Activated CD8-positive, alpha-beta T cell treated with anti-CD3 and anti-CD28 coated beads for 36 hours (primary cell): ENCODE measurements at regions of chr11 and their contacts with region 1.

Region 1: DNA sequence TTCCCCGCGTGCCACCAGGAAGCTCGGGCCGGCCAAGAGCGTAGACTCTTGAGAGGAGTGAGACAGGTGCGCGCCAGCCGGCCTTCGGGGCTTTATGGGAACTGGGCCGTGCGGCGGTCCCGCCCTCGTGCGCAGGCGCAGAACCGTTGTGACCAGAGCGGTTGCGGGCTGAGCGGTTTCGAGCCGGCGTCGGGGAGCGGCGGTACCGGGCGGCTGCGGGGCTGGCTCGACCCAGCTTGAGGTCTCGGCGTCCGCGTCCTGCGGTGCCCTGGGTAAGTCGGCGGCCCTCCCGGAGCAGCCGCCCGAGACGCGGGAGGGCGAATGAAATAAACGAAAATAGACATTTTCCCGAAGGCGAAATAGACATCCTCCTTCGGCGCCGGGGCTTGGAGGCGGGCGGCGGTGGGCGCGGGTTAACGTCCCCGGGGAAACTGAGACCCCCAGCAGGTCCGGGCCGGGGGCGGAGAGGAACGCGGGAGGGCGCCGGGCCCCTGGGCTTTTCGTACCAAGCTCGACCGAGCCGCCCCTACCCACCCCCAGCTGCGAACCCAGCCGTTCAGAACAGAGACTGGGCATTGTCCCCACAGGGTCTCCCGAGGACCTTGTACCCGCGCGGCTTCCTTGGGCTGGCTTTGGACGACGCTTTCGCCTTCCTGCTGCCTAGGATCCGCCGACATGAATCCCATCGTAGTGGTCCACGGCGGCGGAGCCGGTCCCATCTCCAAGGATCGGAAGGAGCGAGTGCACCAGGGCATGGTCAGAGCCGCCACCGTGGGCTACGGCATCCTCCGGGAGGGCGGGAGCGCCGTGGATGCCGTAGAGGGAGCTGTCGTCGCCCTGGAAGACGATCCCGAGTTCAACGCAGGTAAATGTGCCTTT is at the start of gene ASRGL1:
- DNase-seq: peak; percentile 80
- ATAC-seq: peak; percentile 84
- H3K4me3 Mint-ChIP-seq: peak within 1 kb of the TSS; percentile 80
- H3K27ac Mint-ChIP-seq: peak within 1 kb of the TSS; percentile 32
- H3K4me1 Mint-ChIP-seq: peaks cover 8% of the 10 kb centered on the region
- H3K27me3 Mint-ChIP-seq: peaks cover 4% of the 10 kb centered on the region
- CTCF ChIP-seq: no peak
- total RNA-seq, gene ASRGL1: 6.4 to 6.7 TPM

Region 2: DNA sequence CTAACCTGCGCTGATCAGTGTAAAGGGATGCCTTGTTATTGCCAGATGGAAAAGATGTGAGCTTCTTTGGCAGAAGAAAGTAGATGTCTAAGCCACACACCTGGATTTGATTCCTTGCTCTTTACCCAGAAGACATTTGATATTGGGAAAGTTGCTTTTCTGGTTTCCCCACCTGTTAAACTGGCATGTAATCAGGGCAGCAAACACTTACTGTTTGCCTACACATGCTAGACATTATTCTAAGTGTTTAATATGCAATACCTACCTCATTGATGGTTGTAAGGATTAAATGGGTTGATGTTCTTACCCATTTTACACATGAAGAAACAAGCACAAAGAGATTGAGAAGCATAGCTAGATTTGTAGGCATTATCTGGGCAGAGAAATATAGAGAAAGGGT is 16.3 kb after region 1 on chr11:
- CTCF ChIA-PET with region 1: interaction called, 32 read pairs
- POLR2A ChIA-PET with region 1: interaction called, 3 read pairs
- intact Hi-C with region 1: no loop called
- DNase-seq: no peak
- ATAC-seq: no peak
- H3K4me3 Mint-ChIP-seq: no peak overlapping the region
- H3K27ac Mint-ChIP-seq: no peak overlapping the region
- H3K4me1 Mint-ChIP-seq: peaks cover 6% of the 10 kb centered on the region
- H3K27me3 Mint-ChIP-seq: no peaks in the 10 kb centered on the region
- CTCF ChIP-seq: no peak

Region 3: GRCh38 chr11:62372871-62373270 is 35.3 kb after region 1 on chr11:
- CTCF ChIA-PET with region 1: interaction called, 45 read pairs
- POLR2A ChIA-PET with region 1: interaction called, 3 read pairs
- intact Hi-C with region 1: loop called (anchors 2 kb)
- DNase-seq: peak; percentile 27
- ATAC-seq: peak; percentile 41
- H3K4me3 Mint-ChIP-seq: no peak overlapping the region
- H3K27ac Mint-ChIP-seq: no peak overlapping the region
- H3K4me1 Mint-ChIP-seq: peaks cover 11% of the 10 kb centered on the region
- H3K27me3 Mint-ChIP-seq: no peaks in the 10 kb centered on the region
- CTCF ChIP-seq: no peak

Region 4: GRCh38 chr11:62383822-62384221 is 46.3 kb after region 1 on chr11:
- CTCF ChIA-PET with region 1: interaction called, 21 read pairs
- POLR2A ChIA-PET with region 1: no interaction called
- intact Hi-C with region 1: loop called (anchors 2 kb)
- DNase-seq: no peak
- ATAC-seq: no peak
- H3K4me3 Mint-ChIP-seq: no peak overlapping the region
- H3K27ac Mint-ChIP-seq: no peak overlapping the region
- H3K4me1 Mint-ChIP-seq: peaks cover 7% of the 10 kb centered on the region
- H3K27me3 Mint-ChIP-seq: no peaks in the 10 kb centered on the region
- CTCF ChIP-seq: no peak